ENCODE measurements at regions of chr2 and their contacts with region 1.

Region 1: GRCh38 chr2:201231781-201232466 is 28.4 kb upstream of the CASP8 start:
- DNase-seq: peak; percentile 85 to 93 (median 89)
- H3K4me3 ChIP-seq: peak overlapping the region; percentile 33
- H3K4me3 Mint-ChIP-seq: peak overlapping the region; percentile 74 to 99 (median 96)
- H3K27ac ChIP-seq: peak overlapping the region; percentile 13
- H3K27ac Mint-ChIP-seq: peak overlapping the region; percentile 49 to 89 (median 84)
- H3K4me1 ChIP-seq: peaks cover 49% of the 10 kb centered on the region
- H3K4me1 Mint-ChIP-seq: peaks cover 44 to 54% (median 47%) of the 10 kb centered on the region in 3 donors
- H3K27me3 ChIP-seq: no peaks in the 10 kb centered on the region
- H3K27me3 Mint-ChIP-seq: no peaks in the 10 kb centered on the region

Region 2: DNA sequence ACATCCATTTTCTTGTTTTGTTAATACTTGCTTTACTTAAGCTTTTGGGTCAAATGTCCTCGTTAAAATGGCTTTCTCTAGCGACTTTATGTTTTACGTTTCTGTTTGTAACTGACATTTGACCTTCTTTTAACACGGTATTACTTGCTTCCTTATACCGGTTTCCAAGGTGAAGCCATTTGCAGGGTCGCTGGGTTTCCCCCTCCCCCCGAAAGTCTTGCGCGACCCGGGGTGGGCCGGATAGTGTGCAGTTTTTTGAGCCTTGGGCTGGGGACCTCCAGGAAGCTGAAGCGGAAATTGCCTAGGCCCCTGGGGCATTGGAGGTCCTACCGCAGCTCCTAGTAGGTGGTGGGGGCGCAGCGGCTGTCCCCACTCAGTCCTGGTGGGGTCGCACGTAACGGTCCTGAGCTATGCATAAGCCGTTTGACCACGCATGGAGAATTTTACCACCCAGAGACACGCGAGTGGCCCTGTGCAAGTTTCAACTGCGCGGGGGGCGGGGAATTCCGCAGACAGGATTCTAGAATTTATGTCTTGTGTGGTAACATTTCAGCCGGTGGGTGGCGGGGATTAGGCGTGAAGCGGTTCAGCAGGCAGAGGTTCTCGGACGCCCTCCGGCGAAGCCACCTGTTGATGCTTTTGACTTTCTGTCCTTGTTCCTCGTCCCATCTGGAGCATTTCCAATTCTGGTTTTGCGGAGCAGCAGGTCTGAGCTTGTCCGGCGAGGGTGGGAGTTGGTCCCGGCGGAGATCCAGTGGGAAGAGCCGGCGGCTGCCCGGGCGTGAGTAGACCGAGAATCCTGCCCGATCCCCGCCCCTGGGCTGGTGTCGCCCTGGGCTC is 113.6 kb before region 1 on chr2:
- CTCF ChIA-PET with region 1: interaction called, 39 read pairs
- POLR2A ChIA-PET with region 1: interaction called, 27 read pairs
- DNase-seq: peak; percentile 75 to 90 (median 81)
- H3K4me3 ChIP-seq: peak overlapping the region; percentile 89
- H3K4me3 Mint-ChIP-seq: peak overlapping the region; percentile 92 to 100 (median 95)
- H3K27ac ChIP-seq: peak overlapping the region; percentile 96
- H3K27ac Mint-ChIP-seq: peak overlapping the region; percentile 96 to 100 (median 99)
- H3K4me1 ChIP-seq: peaks cover 43% of the 10 kb centered on the region
- H3K4me1 Mint-ChIP-seq: peaks cover 46 to 69% (median 53%) of the 10 kb centered on the region in 3 donors
- H3K27me3 ChIP-seq: no peaks in the 10 kb centered on the region
- H3K27me3 Mint-ChIP-seq: peaks cover 0 to 1% of the 10 kb centered on the region in 2 donors

Region 3: GRCh38 chr2:201182650-201183364 is 49.1 kb before region 1 on chr2 and contains the start of gene CASP10:
- CTCF ChIA-PET with region 1: interaction called, 74 read pairs
- POLR2A ChIA-PET with region 1: interaction called, 21 read pairs
- DNase-seq: peak in 3 of 5 donors; percentile 22 to 79 (median 60)
- H3K4me3 ChIP-seq: peak within 1 kb of the TSS; percentile 93
- H3K4me3 Mint-ChIP-seq: peak within 1 kb of the TSS; percentile 88 to 97 (median 92)
- H3K27ac ChIP-seq: peak within 1 kb of the TSS; percentile 81
- H3K27ac Mint-ChIP-seq: peak within 1 kb of the TSS; percentile 76 to 97 (median 92)
- H3K4me1 ChIP-seq: peaks cover 23% of the 10 kb centered on the region
- H3K4me1 Mint-ChIP-seq: peaks cover 44 to 50% (median 49%) of the 10 kb centered on the region in 3 donors
- H3K27me3 ChIP-seq: no peaks in the 10 kb centered on the region
- H3K27me3 Mint-ChIP-seq: no peaks in the 10 kb centered on the region
- total RNA-seq, gene CASP10: 6.7 to 7.3 TPM

Region 4: GRCh38 chr2:201201371-201201770 is 30.6 kb before region 1 on chr2:
- CTCF ChIA-PET with region 1: interaction called, 58 read pairs
- POLR2A ChIA-PET with region 1: no interaction called
- DNase-seq: peak in 1 of 5 donors; percentile 39
- H3K4me3 ChIP-seq: no peak overlapping the region
- H3K4me3 Mint-ChIP-seq: no peak overlapping the region
- H3K27ac ChIP-seq: no peak overlapping the region
- H3K27ac Mint-ChIP-seq: peak overlapping the region in 4 of 8 donors; percentile 47 to 89 (median 66)
- H3K4me1 ChIP-seq: peaks cover 20% of the 10 kb centered on the region
- H3K4me1 Mint-ChIP-seq: peaks cover 8 to 22% (median 14%) of the 10 kb centered on the region in 3 donors
- H3K27me3 ChIP-seq: no peaks in the 10 kb centered on the region
- H3K27me3 Mint-ChIP-seq: no peaks in the 10 kb centered on the region

Region 5: DNA sequence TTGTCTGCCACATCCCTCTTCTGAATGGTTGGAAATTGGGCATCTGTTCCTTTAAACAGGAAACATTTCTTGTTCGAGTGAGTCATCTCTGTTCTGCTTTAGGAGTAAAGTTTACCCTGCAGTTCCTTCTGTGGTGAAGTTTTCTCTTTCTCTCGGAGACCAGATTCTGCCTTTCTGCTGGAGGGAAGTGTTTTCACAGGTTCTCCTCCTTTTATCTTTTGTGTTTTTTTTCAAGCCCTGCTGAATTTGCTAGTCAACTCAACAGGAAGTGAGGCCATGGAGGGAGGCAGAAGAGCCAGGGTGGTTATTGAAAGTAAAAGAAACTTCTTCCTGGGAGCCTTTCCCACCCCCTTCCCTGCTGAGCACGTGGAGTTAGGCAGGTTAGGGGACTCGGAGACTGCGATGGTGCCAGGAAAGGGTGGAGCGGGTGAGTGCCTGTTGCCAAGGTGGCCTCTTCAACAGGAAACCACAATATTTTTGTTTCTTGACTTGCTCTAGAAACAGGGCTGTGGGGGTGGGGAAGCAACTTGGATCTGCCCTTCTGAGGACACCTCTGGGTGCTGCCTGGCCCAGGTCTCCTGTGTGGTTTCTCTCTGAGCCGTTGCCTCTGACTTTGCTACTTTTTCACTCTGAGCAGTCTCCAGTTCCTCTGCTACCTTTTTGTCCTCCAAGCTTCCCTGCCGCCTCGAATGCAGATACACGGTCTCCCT is 26.2 kb after region 1 on chr2:
- CTCF ChIA-PET with region 1: interaction called, 185 read pairs
- POLR2A ChIA-PET with region 1: interaction called, 35 read pairs
- DNase-seq: peak; percentile 84 to 98 (median 96)
- H3K4me3 ChIP-seq: peak overlapping the region; percentile 82
- H3K4me3 Mint-ChIP-seq: peak overlapping the region; percentile 89 to 99 (median 96)
- H3K27ac ChIP-seq: peak overlapping the region; percentile 97
- H3K27ac Mint-ChIP-seq: peak overlapping the region; percentile 96 to 100 (median 98)
- H3K4me1 ChIP-seq: peaks cover 76% of the 10 kb centered on the region
- H3K4me1 Mint-ChIP-seq: peaks cover 66 to 75% (median 70%) of the 10 kb centered on the region in 3 donors
- H3K27me3 ChIP-seq: no peaks in the 10 kb centered on the region
- H3K27me3 Mint-ChIP-seq: peaks cover 0 to 7% of the 10 kb centered on the region in 2 donors

Region 6: GRCh38 chr2:201357241-201357640 is 125.3 kb after region 1 on chr2 and contains the start of gene FLACC1:
- CTCF ChIA-PET with region 1: interaction called, 55 read pairs
- POLR2A ChIA-PET with region 1: no interaction called
- DNase-seq: no peak
- H3K4me3 ChIP-seq: no peak within 1 kb of the TSS
- H3K4me3 Mint-ChIP-seq: no peak within 1 kb of the TSS
- H3K27ac ChIP-seq: no peak within 1 kb of the TSS
- H3K27ac Mint-ChIP-seq: peak within 1 kb of the TSS in 1 of 8 donors; percentile 23
- H3K4me1 ChIP-seq: peaks cover 7% of the 10 kb centered on the region
- H3K4me1 Mint-ChIP-seq: peaks cover 11 to 24% (median 21%) of the 10 kb centered on the region in 3 donors
- H3K27me3 ChIP-seq: no peaks in the 10 kb centered on the region
- H3K27me3 Mint-ChIP-seq: no peaks in the 10 kb centered on the region
- total RNA-seq, gene FLACC1: 1.8 to 2.5 TPM